ENCODE measurements at regions of chr7 and their contacts with region 1.

Region 1: DNA sequence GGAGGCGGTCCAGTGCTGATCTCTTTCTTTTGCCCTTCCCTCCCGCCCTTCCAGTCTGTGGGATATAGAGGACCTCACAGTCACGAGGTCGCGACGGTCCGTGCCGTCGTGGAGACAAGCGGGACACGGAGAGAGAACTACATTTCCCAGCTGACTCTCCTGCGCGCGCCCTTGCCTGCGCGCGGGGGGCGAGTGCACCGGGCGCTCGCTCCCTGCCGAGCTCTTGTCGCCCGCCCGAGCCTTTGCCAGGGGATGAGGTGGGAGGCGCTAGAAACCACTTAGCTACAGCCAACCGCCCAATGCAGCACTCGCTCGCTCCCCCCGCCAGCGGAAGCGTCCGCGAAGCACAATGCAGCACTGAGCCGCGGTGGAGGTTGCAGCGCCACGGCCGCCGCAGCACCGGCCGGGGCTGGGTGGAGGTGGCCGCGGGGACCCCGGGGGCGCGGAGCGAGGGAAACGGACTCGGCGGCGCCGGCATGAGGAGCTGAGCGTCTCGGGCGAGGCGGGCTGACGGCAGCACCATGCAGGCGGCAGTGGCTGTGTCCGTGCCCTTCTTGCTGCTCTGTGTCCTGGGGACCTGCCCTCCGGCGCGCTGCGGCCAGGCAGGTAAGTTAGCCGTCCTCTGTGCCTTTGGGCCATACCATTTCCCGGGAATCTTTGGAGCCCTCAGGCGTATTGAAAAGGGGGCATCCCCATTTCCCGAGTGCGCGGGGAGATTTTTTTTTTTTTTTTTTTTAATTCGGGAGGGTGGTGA is at the start of gene ADAM22:
- DNase-seq: peak; percentile 97
- H3K4me3 ChIP-seq: peak within 1 kb of the TSS; percentile 78
- H3K27ac ChIP-seq: peak within 1 kb of the TSS; percentile 65
- H3K4me1 ChIP-seq: peaks cover 13% of the 10 kb centered on the region
- CTCF ChIP-seq: peak; percentile 49
- total RNA-seq, gene ADAM22: 12.0 and 20.4 TPM in 2 replicates

Region 2: DNA sequence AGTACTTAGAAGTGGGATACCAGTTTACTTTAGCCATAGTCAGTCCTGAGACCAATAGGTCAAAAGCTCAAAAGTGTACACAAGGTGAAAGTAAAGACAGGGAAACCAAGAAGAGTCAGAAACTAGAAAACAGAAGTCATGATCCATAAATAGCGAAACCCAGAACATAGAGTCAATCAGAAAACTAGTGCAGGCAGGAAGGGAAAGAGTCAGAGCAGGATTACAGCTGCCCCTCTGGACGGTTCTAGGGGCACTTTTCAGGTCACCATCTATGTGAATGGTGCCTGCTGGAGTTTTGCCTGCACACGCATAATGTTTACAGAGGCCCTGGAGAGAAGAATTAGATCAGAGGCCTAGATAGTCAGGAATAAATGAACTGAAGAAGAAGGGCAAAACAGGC is 804.3 kb before region 1 on chr7:
- CTCF ChIA-PET with region 1: no interaction called
- POLR2A ChIA-PET with region 1: no interaction called
- intact Hi-C with region 1: no loop called
- DNase-seq: no peak
- H3K4me3 ChIP-seq: no peak overlapping the region
- H3K27ac ChIP-seq: no peak overlapping the region
- H3K4me1 ChIP-seq: no peaks in the 10 kb centered on the region
- CTCF ChIP-seq: no peak

Region 3: GRCh38 chr7:87219545-87220025 is 714.5 kb before region 1 on chr7 and contains the start of gene TMEM243:
- CTCF ChIA-PET with region 1: no interaction called
- POLR2A ChIA-PET with region 1: no interaction called
- intact Hi-C with region 1: loop called (anchors 5 kb)
- DNase-seq: peak; percentile 92
- H3K4me3 ChIP-seq: peak within 1 kb of the TSS; percentile 82
- H3K27ac ChIP-seq: peak within 1 kb of the TSS; percentile 98
- H3K4me1 ChIP-seq: peaks cover 41% of the 10 kb centered on the region
- CTCF ChIP-seq: peak; percentile 67
- total RNA-seq, gene TMEM243: 116 and 126 TPM in 2 replicates

Region 4: GRCh38 chr7:87345166-87345927 is 588.8 kb before region 1 on chr7 and contains the start of gene CROT:
- CTCF ChIA-PET with region 1: no interaction called
- POLR2A ChIA-PET with region 1: no interaction called
- intact Hi-C with region 1: loop called (anchors 5 kb)
- DNase-seq: peak; percentile 95
- H3K4me3 ChIP-seq: peak within 1 kb of the TSS; percentile 74
- H3K27ac ChIP-seq: peak within 1 kb of the TSS; percentile 57
- H3K4me1 ChIP-seq: peaks cover 30% of the 10 kb centered on the region
- CTCF ChIP-seq: no peak
- total RNA-seq, gene CROT: 3.0 and 5.2 TPM in 2 replicates

Region 5: DNA sequence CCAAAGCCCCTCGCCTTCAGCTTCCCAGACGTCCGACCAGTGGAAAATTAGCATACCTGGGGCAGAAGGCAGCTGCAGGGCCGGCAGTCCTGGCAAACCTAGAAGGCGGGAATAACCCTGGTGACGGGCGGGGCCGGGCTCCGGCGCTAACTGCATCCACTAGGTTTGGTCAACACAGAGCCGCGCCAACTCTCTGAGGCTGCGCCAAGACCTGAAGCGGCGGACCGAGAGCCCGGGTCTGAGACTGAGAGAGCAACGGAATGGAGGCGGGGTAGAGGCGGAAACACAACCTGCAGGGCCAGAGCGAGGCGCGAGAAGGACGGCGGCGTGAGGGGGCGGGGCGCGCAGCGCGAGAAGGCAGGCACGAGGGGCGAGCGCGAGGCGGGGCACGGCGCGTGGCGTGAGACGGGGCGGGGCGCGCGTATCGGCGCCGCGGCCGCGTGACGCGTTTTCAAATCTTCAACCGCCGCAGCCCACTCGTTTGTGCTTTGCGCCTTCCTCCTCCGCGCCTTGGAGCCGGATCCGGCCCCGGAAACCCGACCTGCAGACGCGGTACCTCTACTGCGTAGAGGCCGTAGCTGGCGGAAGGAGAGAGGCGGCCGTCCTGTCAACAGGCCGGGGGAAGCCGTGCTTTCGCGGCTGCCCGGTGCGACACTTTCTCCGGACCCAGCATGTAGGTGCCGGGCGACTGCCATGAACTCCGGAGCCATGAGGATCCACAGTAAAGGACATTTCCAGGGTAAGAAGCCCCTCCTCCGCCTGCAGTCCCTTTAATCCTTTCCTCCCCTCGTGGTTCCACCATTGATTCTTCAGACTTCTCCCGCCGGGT is 57.9 kb before region 1 on chr7 and contains the starts of genes DBF4 and SLC25A40:
- CTCF ChIA-PET with region 1: no interaction called
- POLR2A ChIA-PET with region 1: interaction called, 8 read pairs
- intact Hi-C with region 1: loop called (anchors 1 kb)
- DNase-seq: peak; percentile 96
- H3K4me3 ChIP-seq: peak within 1 kb of the TSS; percentile 94
- H3K27ac ChIP-seq: peak within 1 kb of the TSS; percentile 99
- H3K4me1 ChIP-seq: peaks cover 29% of the 10 kb centered on the region
- CTCF ChIP-seq: no peak
- total RNA-seq, gene DBF4: 83.9 and 99.2 TPM in 2 replicates
- total RNA-seq, gene SLC25A40: 21.0 and 22.0 TPM in 2 replicates

Region 6: DNA sequence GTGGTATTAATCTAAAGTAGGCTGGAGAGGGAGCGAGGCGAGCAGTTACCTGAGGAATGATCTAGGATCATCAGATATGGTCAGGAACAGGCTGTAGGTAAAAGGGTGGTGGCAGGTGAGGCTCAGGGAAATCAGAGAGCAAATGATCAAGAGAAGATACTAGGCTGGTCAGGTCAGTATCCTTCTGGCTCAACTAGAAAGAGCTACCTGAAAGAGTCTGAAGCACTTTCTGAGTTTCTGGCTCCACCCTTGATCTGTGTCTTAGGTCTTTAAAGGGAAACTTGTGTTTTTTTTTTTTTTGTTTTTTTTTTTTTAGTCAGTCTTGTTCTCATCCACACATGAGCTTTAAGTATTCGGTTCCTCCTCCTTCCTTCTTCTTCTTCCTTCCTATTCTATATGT is 10.4 kb after region 1 on chr7:
- CTCF ChIA-PET with region 1: no interaction called
- POLR2A ChIA-PET with region 1: interaction called, 17 read pairs
- intact Hi-C with region 1: no loop called
- DNase-seq: no peak
- H3K4me3 ChIP-seq: no peak overlapping the region
- H3K27ac ChIP-seq: no peak overlapping the region
- H3K4me1 ChIP-seq: no peaks in the 10 kb centered on the region
- CTCF ChIP-seq: no peak

Region 7: GRCh38 chr7:88111136-88111743 is 177.1 kb after region 1 on chr7:
- CTCF ChIA-PET with region 1: no interaction called
- POLR2A ChIA-PET with region 1: no interaction called
- intact Hi-C with region 1: loop called (anchors 10 kb)
- DNase-seq: peak; percentile 49
- H3K4me3 ChIP-seq: no peak overlapping the region
- H3K27ac ChIP-seq: no peak overlapping the region
- H3K4me1 ChIP-seq: no peaks in the 10 kb centered on the region
- CTCF ChIP-seq: peak; percentile 83

Region 8: DNA sequence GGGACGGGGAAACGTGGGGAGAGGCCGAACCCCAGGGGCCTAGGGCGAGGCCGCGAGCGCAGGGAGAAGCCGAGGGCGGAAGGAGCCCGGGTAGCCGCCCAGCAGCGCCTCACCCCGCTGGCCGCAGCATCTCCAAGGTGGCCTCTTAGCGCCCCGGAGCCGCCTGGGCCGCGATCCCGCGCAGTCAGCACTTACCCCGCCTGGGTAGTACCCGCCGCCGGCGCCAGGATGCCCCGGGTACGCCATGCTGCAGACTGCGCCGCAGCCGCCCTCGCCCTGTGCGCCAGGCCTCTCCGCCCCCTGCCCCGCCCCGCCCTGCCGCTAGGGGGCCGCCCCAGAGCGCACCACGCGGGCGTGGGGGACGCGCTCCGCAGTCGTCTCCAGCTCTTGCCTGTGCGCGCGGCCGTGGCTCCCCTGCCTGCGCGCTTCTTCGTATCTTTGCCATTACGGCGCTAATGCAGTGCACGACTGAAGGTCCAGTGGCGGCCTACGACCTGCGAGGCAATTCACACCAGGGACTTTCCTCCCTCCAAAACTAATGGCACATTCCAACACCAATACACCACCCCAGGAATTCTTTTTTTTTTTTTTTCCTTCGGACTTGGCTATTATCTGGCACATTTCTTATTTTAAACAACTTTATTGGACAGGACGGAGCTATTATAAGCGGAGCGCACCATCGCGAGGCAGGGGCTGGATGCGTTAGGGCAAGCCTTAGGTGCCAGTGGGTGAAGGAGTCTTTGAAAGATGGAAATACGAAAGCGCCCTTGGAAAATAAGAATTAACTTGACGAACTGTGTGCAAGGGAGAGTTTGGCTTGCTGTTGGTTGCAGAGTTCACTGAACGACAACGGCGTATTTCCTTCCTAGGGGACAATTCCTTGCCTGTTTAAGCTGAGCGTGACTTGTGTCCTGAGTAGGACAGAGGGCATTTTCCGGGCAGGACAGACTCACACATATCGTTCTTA is 285.9 kb after region 1 on chr7 and contains the start of gene SRI:
- CTCF ChIA-PET with region 1: interaction called, 4 read pairs
- POLR2A ChIA-PET with region 1: no interaction called
- intact Hi-C with region 1: loop called (anchors 5 kb)
- DNase-seq: peak; percentile 87
- H3K4me3 ChIP-seq: peak within 1 kb of the TSS; percentile 82
- H3K27ac ChIP-seq: peak within 1 kb of the TSS; percentile 63
- H3K4me1 ChIP-seq: peaks cover 20% of the 10 kb centered on the region
- CTCF ChIP-seq: peak; percentile 72
- total RNA-seq, gene SRI: 61.7 and 73.9 TPM in 2 replicates

Measured in OCI-LY7 (cell line).